ENCODE measurements at regions of chr20 and their contacts with region 1.

Region 1: DNA sequence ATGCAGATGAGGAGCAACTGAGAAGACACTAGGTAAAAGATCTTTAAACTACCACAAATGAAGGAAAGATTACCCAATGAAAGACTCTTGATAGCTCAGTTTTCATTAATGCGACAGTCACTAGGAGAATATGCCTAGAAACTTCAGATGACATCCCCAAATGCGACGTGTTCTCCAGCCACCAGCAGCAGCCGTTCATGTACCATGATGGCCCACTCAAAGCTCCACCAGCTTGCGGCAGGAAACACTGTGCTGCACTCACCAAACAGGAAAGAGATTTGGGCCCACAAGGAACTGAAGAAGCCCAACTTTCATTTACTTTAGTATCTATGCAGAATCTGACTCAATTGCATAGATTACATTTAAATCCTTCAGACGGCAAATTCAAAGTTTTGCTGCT is 7.5 kb downstream of the DIDO1 start:
- DNase-seq: no peak

Region 2: DNA sequence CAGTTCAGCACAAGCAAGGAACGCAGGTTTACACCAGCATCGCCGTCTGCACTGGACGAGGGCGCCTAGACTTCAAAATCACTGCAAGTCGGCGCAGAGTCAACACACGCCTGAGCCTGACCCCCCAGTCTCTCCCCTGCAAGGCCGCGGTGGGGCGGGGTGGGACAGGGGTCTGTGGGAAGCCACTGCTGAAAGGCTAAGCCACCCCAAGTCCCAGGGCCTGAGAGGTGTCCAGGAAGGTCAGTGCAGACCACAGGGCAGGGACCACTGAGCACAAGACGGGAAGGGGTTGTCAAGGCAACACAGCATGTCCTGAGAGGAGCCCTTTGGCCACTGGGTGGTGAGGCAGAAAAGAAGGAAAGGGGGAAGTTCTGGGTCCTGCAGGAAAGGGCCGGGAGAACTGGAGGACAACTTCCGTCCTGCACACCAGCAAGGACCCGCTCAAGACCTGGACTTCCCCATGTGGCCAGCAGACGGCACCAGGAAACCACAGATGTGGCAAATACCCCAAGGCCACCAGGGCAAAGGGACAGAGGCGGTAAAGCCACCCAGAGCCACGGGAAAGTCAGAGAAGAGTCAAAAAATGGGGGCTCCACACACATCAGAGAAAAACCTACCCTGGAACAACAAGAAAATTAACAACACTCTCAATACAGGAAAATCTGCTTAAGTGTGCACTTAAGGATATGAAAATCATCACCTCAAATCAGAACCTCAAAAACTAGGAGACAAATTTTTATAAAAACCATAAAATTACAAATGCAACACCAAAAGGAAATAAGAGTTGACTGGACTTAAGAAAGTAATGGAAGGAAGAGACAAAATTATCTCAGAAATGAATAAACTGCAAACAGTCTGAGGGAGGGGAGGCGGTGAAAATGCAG is 937.9 kb before region 1 on chr20:
- CTCF ChIA-PET with region 1: no interaction called
- POLR2A ChIA-PET with region 1: no interaction called
- DNase-seq: peak; percentile 77

Region 3: GRCh38 chr20:62907384-62908317 is 11.2 kb before region 1 on chr20:
- CTCF ChIA-PET with region 1: interaction called, 20 read pairs
- POLR2A ChIA-PET with region 1: interaction called, 3 read pairs
- DNase-seq: peak; percentile 37